ENCODE measurements at regions of chr11 and their contacts with region 1.

Region 1: GRCh38 chr11:86174101-86175046 is 70.2 kb upstream of the EED start:
- DNase-seq: no peak
- H3K4me3 Mint-ChIP-seq: no peak overlapping the region
- H3K27ac Mint-ChIP-seq: no peak overlapping the region
- H3K4me1 Mint-ChIP-seq: peaks cover 33% of the 10 kb centered on the region
- H3K27me3 Mint-ChIP-seq: no peaks in the 10 kb centered on the region

Region 2: GRCh38 chr11:86047275-86047991 is 126.9 kb before region 1 on chr11:
- intact Hi-C with region 1: loop called (anchors 1 kb)
- DNase-seq: no peak
- H3K4me3 Mint-ChIP-seq: peak overlapping the region; percentile 69
- H3K27ac Mint-ChIP-seq: peak overlapping the region; percentile 91
- H3K4me1 Mint-ChIP-seq: peaks cover 88% of the 10 kb centered on the region
- H3K27me3 Mint-ChIP-seq: no peaks in the 10 kb centered on the region

Region 3: GRCh38 chr11:86116386-86116726 is 58.0 kb before region 1 on chr11:
- intact Hi-C with region 1: loop called (anchors 5 kb)
- DNase-seq: no peak
- H3K4me3 Mint-ChIP-seq: peak overlapping the region; percentile 9
- H3K27ac Mint-ChIP-seq: peak overlapping the region; percentile 70
- H3K4me1 Mint-ChIP-seq: peaks cover 30% of the 10 kb centered on the region
- H3K27me3 Mint-ChIP-seq: no peaks in the 10 kb centered on the region

Region 4: DNA sequence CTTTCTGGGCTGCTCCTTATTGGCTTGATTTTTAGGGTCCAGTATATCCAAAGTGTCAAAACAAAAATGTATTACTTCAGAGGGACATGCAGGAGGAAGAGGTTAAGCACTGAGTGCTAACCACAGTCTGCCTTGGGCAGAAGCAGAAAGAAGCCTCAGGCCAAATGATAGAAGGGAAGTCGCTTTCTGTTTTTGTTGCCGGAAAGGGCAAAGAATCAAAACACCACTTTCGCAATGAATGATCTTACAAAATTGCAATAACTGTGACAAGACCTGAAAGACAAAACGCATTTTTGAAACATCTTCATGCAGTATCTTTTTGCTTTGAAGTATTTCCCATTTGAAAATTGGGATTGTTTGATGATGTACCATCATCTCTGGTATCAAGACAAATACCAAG is 35.4 kb before region 1 on chr11:
- intact Hi-C with region 1: loop called (anchors 1 kb)
- DNase-seq: peak; percentile 37
- H3K4me3 Mint-ChIP-seq: peak overlapping the region; percentile 57
- H3K27ac Mint-ChIP-seq: peak overlapping the region; percentile 81
- H3K4me1 Mint-ChIP-seq: peaks cover 75% of the 10 kb centered on the region
- H3K27me3 Mint-ChIP-seq: no peaks in the 10 kb centered on the region

Region 5: GRCh38 chr11:86193297-86194095 is 19.1 kb after region 1 on chr11:
- intact Hi-C with region 1: loop called (anchors 2 kb)
- DNase-seq: peak; percentile 58
- H3K4me3 Mint-ChIP-seq: peak overlapping the region; percentile 58
- H3K27ac Mint-ChIP-seq: peak overlapping the region; percentile 54
- H3K4me1 Mint-ChIP-seq: peaks cover 43% of the 10 kb centered on the region
- H3K27me3 Mint-ChIP-seq: no peaks in the 10 kb centered on the region

Measured in activated T-helper 1 cell treated with anti-CD3 and anti-CD28 coated beads, Interleukin-12 subunit alpha, Interleukin-12 subunit beta, Interleukin-2, Interleukin-4 antibody, amounts not matched to agents 30 ng/mL and 10 ng/mL and 1 ng/mL, durations not matched to agents 14 hours and 24 hours and 36 hours (primary cell).